Left ventricle myocardium superior (tissue), 1 donor: ENCODE measurements at regions of chr3 and their contacts with region 1.

Region 1: DNA sequence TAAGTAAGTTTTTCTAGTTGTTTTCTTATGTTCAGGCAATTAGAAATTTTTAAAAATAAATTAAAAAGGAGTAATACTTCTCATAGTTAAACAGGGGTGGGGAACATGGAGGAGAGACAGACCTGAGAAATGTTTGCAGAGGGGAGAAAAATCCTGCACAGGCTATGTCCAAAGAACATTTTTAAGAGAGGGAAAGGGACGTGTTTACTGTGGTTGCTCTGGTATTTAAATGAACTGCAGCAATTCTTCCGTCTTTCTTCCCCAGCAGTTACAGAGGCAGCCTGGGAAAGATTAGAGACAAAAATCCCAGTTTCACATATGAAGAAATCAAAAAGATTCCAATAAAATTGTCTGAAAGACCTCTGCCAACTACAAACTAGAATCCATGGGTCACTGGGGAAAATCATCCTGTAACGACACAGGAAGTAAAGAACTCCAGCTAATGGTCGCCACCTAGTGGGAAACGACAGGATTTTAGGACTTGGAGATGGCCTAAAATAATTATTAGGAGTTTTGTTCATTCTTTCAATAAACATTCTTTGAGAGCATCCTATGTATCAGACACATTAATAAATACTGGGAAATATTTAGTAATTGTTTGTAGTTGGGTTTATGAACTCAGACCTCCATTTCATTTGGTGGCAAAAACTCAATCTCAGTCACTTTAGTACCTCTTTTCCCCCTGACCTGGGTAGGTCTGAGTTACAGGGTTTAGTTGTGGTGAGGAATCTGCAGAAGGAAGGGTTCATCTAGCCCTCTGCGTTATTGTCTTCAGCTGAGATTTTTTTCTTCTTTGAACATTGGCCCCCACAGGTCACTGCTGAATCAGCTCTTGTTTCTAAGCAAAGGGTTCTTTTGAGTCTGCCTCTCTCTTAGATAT is 69.9 kb upstream of the GOLIM4 start:
- DNase-seq: no peak
- ATAC-seq: peak; percentile 83

Region 2: GRCh38 chr3:167929968-167930367 is 235.7 kb before region 1 on chr3:
- intact Hi-C with region 1: loop called (anchors 10 kb)
- DNase-seq: no peak
- ATAC-seq: peak; percentile 77

Region 3: GRCh38 chr3:168047190-168047795 is 118.3 kb before region 1 on chr3:
- intact Hi-C with region 1: loop called (anchors 2 kb)
- DNase-seq: no peak
- ATAC-seq: peak; percentile 61

Region 4: DNA sequence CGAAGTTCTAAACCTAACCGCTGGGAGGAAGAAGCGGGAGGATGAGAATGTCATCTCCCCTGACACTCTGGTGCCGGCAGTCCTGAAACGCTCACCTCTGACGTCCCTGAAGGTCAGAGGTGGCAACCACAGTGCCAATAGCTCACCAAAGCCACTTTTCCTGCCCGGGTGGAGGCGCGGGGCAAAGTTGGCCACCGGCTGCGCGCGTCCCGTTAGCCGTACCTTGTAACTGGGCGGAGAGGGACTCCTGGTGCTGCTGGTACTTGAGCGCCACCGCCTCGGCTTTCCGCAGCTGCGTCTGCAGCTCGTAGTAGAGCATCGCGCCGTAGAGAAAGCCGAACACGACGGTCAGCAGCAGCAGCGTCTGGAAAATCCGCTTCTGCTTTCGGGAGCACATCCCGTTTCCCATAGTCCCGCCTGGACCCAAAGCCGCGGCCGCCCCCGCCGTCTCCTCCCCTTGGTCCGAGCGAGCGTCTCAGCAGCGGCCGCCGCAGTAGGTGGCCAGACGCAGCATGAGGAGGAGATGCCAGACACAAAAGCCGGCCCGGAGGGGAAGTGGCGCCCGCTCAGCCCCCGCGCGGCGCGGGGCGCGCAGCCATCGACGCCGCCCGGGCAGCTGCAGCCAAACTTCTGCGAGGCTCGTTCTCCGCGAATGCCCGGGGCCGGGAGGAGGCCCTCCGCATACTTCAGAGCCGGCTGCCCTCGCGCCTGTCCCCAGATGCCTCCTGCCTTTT is 70.6 kb before region 1 on chr3:
- intact Hi-C with region 1: loop called (anchors 1 kb)
- DNase-seq: peak; percentile 80
- ATAC-seq: peak; percentile 45